CD4-positive, alpha-beta T cell (primary cell): ENCODE measurements at regions of chr7 and their contacts with region 1.

Region 1: GRCh38 chr7:14424675-14425074 is 435.2 kb upstream of the ETV1 start:
- DNase-seq: no peak
- ATAC-seq: no peak
- H3K4me3 ChIP-seq: no peak overlapping the region
- H3K4me3 Mint-ChIP-seq: no peak overlapping the region
- H3K27ac ChIP-seq: no peak overlapping the region
- H3K27ac Mint-ChIP-seq: no peak overlapping the region
- H3K4me1 ChIP-seq: no peaks in the 10 kb centered on the region
- H3K4me1 Mint-ChIP-seq: no peaks in the 10 kb centered on the region
- H3K27me3 ChIP-seq: no peaks in the 10 kb centered on the region
- H3K27me3 Mint-ChIP-seq: no peaks in the 10 kb centered on the region
- CTCF ChIP-seq: no peak

Region 2: DNA sequence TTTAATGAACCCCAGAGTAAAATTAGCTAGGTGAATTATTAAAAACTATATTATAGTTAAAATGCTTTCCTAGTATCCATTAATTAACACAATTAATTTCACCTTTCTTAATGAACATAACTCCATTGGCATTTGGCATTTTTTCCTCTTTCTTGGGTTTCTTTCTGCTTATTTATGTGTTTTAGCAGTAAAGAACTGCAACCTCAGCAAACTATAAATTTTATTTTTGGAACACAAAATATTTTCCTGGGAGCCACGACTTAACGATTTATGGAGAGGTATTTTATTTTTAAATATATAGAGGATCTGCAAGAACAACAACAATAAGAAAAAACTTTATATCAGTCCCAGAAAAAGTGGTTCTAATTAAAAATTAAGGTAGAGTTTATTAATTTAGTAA is 12.2 kb after region 1 on chr7:
- CTCF ChIA-PET with region 1: no interaction called
- POLR2A ChIA-PET with region 1: no interaction called
- intact Hi-C with region 1: loop called in 1 of 2 experiments (anchors 1 kb)
- DNase-seq: no peak
- ATAC-seq: no peak
- H3K4me3 ChIP-seq: no peak overlapping the region
- H3K4me3 Mint-ChIP-seq: no peak overlapping the region
- H3K27ac ChIP-seq: no peak overlapping the region
- H3K27ac Mint-ChIP-seq: no peak overlapping the region
- H3K4me1 ChIP-seq: no peaks in the 10 kb centered on the region
- H3K4me1 Mint-ChIP-seq: no peaks in the 10 kb centered on the region
- H3K27me3 ChIP-seq: no peaks in the 10 kb centered on the region
- H3K27me3 Mint-ChIP-seq: no peaks in the 10 kb centered on the region
- CTCF ChIP-seq: no peak